Caco-2 (cell line): ENCODE measurements at regions of chr9 and their contacts with region 1.

Region 1: GRCh38 chr9:36560857-36561221 is 11.9 kb upstream of the MELK start:
- DNase-seq: peak; percentile 46 to 53
- H3K4me3 ChIP-seq: no peak overlapping the region
- H3K4me3 Mint-ChIP-seq: peak overlapping the region; percentile 19
- H3K27ac Mint-ChIP-seq: peak overlapping the region; percentile 69
- H3K4me1 ChIP-seq: peaks cover 23% of the 10 kb centered on the region
- H3K4me1 Mint-ChIP-seq: peaks cover 11% of the 10 kb centered on the region
- H3K27me3 ChIP-seq: no peaks in the 10 kb centered on the region
- H3K27me3 Mint-ChIP-seq: no peaks in the 10 kb centered on the region
- CTCF ChIP-seq: no peak

Region 2: DNA sequence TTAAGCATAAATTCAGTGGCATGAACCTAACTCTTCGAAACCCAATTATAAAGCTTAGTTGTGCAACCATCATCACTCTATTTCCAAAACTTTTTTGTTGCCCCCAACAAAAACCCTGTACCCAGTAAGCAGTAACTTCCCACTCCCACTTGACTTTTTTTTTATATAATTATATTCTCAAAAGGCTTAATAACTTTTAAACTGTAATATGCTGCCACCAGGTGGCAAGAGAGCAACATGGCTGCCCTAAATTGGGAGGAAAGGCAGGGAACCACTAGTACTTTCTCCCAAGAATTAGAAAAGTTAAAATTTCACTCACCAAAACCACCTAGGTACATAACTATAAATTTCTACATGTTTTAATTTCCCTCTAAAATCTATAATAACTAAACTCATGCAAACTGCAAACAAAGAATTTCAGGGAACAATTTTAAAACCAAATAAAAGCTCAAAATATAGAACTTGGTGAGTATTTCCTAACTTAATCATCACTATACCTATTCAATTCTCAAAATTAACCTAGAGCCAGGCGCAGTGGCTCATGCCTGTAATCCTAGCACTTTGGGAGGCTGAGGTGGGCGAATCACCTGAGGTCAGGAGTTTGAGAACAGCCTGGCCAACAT is 110.6 kb before region 1 on chr9:
- CTCF ChIA-PET with region 1: no interaction called
- POLR2A ChIA-PET with region 1: no interaction called
- intact Hi-C with region 1: loop called (anchors 2 kb)
- DNase-seq: peak; percentile 37 to 47
- H3K4me3 ChIP-seq: no peak overlapping the region
- H3K4me3 Mint-ChIP-seq: no peak overlapping the region
- H3K27ac Mint-ChIP-seq: no peak overlapping the region
- H3K4me1 ChIP-seq: no peaks in the 10 kb centered on the region
- H3K4me1 Mint-ChIP-seq: no peaks in the 10 kb centered on the region
- H3K27me3 ChIP-seq: no peaks in the 10 kb centered on the region
- H3K27me3 Mint-ChIP-seq: no peaks in the 10 kb centered on the region
- CTCF ChIP-seq: peak; percentile 63 to 77

Region 3: DNA sequence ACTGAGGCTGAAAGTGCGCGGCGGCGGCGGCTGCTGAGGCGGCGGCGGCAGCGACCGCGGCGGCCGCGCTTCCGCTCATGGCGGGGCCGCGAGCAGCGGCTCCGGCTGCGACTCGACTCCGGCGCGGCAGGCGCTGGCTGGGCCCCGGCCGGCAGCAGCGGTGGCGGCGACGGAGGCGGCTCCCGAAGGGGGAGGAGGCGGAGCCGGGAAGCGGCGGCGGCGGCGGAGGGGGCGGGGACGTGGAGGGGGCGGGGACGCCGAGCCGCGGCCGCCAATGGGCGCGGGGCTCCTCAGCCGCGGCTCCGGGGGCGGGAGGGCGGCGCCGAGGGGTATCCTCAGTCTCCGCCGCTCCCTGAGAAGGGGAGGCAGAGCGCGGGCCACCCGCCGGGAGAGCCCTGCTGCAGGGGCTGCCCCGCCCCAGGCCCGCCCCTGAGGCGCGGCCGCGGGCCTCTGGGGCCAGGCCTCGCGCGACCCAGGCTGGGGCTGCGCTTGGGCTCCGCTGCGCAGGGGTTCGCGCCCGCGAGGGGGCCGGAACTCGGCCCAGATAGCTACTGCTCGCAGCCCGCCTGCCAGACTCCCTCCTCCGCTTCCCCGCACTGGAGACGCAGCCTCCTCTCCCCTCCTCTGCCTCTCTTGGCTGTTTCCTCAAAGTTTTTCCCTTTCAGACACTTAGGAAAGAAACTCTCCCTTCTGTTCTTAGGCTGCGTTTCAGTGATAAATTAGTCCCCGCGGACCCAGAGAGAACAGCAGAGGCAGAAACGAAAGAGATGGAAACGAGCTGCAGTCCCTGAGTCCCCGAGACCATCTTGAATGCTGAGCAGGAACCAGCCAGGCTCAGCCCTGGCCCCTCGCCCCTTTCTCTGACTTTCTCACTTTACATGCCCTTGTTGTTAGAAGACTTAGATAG is 73.1 kb before region 1 on chr9:
- CTCF ChIA-PET with region 1: no interaction called
- POLR2A ChIA-PET with region 1: no interaction called
- intact Hi-C with region 1: loop called (anchors 5 kb)
- DNase-seq: peak; percentile 92 to 95
- H3K4me3 ChIP-seq: peak overlapping the region; percentile 98
- H3K4me3 Mint-ChIP-seq: peak overlapping the region; percentile 79
- H3K27ac Mint-ChIP-seq: peak overlapping the region; percentile 85
- H3K4me1 ChIP-seq: 0 out of 2 replicates have a peak, but pooled peaks cover 6% of the 10 kb centered on the region
- H3K4me1 Mint-ChIP-seq: peaks cover 7% of the 10 kb centered on the region
- H3K27me3 ChIP-seq: no peaks in the 10 kb centered on the region
- H3K27me3 Mint-ChIP-seq: no peaks in the 10 kb centered on the region
- CTCF ChIP-seq: no peak

Region 4: GRCh38 chr9:36572515-36573418 is 11.9 kb after region 1 on chr9 and contains the start of gene MELK:
- CTCF ChIA-PET with region 1: interaction called, 3 read pairs
- POLR2A ChIA-PET with region 1: no interaction called
- intact Hi-C with region 1: loop called (anchors 2 kb)
- DNase-seq: peak; percentile 86 to 93
- H3K4me3 ChIP-seq: peak within 1 kb of the TSS; percentile 97
- H3K4me3 Mint-ChIP-seq: peak within 1 kb of the TSS; percentile 92
- H3K27ac Mint-ChIP-seq: peak within 1 kb of the TSS; percentile 91
- H3K4me1 ChIP-seq: peaks cover 39% of the 10 kb centered on the region
- H3K4me1 Mint-ChIP-seq: peaks cover 15% of the 10 kb centered on the region
- H3K27me3 ChIP-seq: no peaks in the 10 kb centered on the region
- H3K27me3 Mint-ChIP-seq: no peaks in the 10 kb centered on the region
- CTCF ChIP-seq: no peak
- total RNA-seq, gene MELK: 57.8 and 59.6 TPM in 2 replicates

Region 5: DNA sequence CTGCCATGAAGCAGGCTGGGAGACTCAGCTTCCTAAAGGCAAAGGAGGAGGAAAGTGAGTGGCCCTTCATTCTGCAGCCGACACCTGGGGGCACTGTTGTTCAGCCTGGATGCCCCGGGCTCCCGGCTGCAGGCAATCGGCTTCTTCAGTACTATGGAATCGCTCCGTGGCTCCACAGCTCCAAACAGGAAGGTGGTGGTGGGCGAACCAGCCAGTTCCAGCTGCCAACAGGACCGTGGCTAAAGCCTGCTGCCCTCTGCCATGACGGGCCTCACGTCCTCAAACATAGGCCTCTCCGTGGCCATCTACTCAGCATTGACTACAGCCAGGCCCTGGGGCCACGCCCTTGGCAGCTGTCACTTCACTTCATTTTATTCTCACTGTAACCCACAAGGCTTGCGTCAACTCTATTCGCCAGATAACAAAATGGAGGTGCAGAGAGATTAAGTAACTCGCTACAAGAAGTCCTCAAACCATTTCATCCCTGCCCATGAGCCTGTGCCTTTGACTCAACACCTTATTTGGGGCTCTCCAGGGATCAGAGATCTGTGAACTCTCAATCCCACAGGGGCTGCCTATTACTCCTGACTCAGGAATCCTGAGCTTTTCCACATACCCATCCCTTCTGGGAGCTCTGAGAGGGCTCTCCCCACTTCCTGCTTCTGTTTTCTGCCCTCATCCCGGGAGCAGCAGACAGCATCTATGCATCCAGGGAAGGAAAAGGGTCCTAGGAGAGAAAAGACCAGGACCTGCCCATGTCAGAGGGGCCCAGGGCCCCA is 435.3 kb after region 1 on chr9:
- CTCF ChIA-PET with region 1: no interaction called
- POLR2A ChIA-PET with region 1: no interaction called
- intact Hi-C with region 1: no loop called
- DNase-seq: peak; percentile 74 to 82
- H3K4me3 ChIP-seq: peak overlapping the region; percentile 36
- H3K4me3 Mint-ChIP-seq: peak overlapping the region; percentile 41
- H3K27ac Mint-ChIP-seq: no peak overlapping the region
- H3K4me1 ChIP-seq: no peaks in the 10 kb centered on the region
- H3K4me1 Mint-ChIP-seq: no peaks in the 10 kb centered on the region
- H3K27me3 ChIP-seq: no peaks in the 10 kb centered on the region; the same call in none of the 2 replicates
- H3K27me3 Mint-ChIP-seq: no peaks in the 10 kb centered on the region
- CTCF ChIP-seq: peak; percentile 77 to 89